ENCODE measurements at regions of chr2 and their contacts with region 1.

Region 1: GRCh38 chr2:98822301-98823164 is 91.6 kb upstream of the MGAT4A start:
- DNase-seq: peak; percentile 71 to 89
- ATAC-seq: peak; percentile 80
- H3K4me3 ChIP-seq: peak overlapping the region; percentile 41 to 56
- H3K27ac ChIP-seq: no peak overlapping the region
- H3K4me1 ChIP-seq: no peaks in the 10 kb centered on the region
- H3K27me3 ChIP-seq: no peaks in the 10 kb centered on the region

Region 2: DNA sequence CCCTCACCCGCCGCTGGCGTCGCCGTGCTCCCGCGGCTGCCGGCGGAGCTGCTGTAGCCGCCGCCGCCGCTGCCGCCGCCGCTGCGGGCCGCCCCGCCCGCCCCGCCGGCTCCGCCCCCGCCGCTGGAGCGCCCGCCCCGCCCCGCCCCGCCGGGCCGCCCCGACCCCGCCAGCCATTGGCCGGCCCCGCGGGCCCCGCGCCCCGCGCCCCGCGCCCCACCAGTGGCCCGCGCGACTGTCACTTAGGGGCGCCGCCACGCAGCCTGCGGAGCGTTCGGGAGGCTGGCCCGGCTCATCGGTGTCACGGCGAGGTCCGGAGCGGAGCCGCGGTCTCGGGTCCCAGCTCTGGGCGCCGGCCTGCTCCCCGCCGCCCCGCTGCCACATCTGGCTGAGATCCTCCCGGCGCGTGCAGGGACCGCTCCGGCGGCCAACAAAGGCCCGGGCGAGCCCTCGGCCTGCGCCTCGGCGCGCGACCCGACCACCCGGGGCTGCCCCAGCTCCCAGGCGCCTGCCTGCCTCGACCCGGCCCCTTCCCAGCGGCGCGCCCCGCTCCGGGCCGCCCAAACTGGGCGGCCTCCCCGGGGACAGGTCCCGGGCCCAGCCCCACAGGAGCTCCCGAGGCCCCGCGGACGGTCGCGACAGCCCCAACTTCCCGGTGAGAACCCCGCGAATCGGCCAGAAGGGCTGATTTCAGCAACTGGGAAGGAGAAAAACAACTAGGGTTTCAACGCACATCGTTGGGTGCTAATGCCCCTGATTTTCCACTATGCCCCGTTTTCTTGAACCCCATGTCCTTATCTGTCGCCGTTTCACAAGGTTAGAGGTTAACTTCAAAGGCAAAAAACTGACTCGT is 91.3 kb before region 1 on chr2 and contains the start of gene MGAT4A:
- intact Hi-C with region 1: loop called (anchors 5 kb)
- DNase-seq: peak; percentile 87 to 91
- ATAC-seq: peak; percentile 92
- H3K4me3 ChIP-seq: peak within 1 kb of the TSS; percentile 96 to 99
- H3K27ac ChIP-seq: peak within 1 kb of the TSS in 1 of 2 donors; percentile 49
- H3K4me1 ChIP-seq: no peaks in the 10 kb centered on the region
- H3K27me3 ChIP-seq: no peaks in the 10 kb centered on the region
- total RNA-seq, gene MGAT4A: 41.0 to 65.8 TPM